ENCODE measurements at regions of chr1 and their contacts with region 1.

Region 1: GRCh38 chr1:80341021-80341420 is 1334.5 kb upstream of the ADGRL4 start:
- DNase-seq: no peak

Region 2: GRCh38 chr1:81330521-81330920 is 989.5 kb after region 1 on chr1:
- intact Hi-C with region 1: loop called in 1 of 2 experiments (anchors 5 kb)
- DNase-seq: no peak